Mammary epithelial cell (primary cell): ENCODE measurements at regions of chr10 and their contacts with region 1.

Region 1: DNA sequence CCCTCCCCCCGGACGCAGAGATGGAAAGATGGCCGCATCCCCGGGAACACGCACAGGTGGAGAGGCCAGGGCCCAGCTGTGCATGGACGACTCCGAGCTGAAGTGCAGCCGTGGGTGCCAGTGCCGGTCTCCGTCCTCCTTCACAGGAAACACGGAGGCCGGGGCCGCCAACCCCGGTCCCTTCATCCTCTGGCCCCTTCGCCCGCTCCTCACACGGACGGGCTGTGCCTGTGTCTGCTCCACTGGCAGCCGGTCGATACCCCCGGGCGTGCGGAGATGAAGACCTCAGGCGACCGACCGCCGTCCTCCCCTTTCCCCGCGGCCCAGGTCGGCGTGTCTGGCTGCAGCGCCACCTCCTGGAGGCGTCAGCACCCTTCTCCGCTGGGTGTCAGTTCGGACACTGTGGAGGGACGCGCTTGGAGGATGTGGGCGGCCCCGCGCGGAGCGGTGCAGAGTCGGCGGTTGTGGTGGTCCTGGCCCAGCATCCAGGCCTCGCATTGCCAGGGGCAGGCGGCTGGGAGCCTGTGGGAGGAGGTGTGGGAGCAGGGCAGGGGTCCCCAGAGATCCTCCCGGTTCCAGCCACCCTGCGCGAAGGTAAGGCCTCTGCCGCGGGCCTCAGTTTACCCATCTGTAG is 9.9 kb downstream of the ZNF511 start:
- DNase-seq: peak; percentile 37
- H3K4me3 ChIP-seq: peak overlapping the region in 2 of 3 experiments; percentile 42 to 45
- H3K27ac ChIP-seq: no peak overlapping the region
- H3K4me1 ChIP-seq: peaks cover 7% of the 10 kb centered on the region
- H3K27me3 ChIP-seq: no peaks in the 10 kb centered on the region
- CTCF ChIP-seq: peak; percentile 58 to 79

Region 2: GRCh38 chr10:132836832-132837540 is 481.6 kb before region 1 on chr10:
- CTCF ChIA-PET with region 1: no interaction called
- dilution Hi-C with region 1: no loop called
- in situ Hi-C with region 1: no loop called
- intact Hi-C with region 1: loop called (anchors 10 kb)
- DNase-seq: peak; percentile 6
- H3K4me3 ChIP-seq: no peak overlapping the region
- H3K27ac ChIP-seq: no peak overlapping the region
- H3K4me1 ChIP-seq: no peaks in the 10 kb centered on the region
- H3K27me3 ChIP-seq: peaks cover 2% of the 10 kb centered on the region
- CTCF ChIP-seq: peak; percentile 50 to 84

Region 3: GRCh38 chr10:132904181-132904819 is 414.3 kb before region 1 on chr10:
- CTCF ChIA-PET with region 1: no interaction called
- dilution Hi-C with region 1: no loop called
- in situ Hi-C with region 1: no loop called
- intact Hi-C with region 1: loop called (anchors 2 kb)
- DNase-seq: peak; percentile 23
- H3K4me3 ChIP-seq: no peak overlapping the region
- H3K27ac ChIP-seq: no peak overlapping the region
- H3K4me1 ChIP-seq: no peaks in the 10 kb centered on the region
- H3K27me3 ChIP-seq: no peaks in the 10 kb centered on the region
- CTCF ChIP-seq: peak; percentile 43 to 53